Heart left ventricle (tissue), 16 donors: ENCODE measurements at regions of chr11 and their contacts with region 1.

Region 1: DNA sequence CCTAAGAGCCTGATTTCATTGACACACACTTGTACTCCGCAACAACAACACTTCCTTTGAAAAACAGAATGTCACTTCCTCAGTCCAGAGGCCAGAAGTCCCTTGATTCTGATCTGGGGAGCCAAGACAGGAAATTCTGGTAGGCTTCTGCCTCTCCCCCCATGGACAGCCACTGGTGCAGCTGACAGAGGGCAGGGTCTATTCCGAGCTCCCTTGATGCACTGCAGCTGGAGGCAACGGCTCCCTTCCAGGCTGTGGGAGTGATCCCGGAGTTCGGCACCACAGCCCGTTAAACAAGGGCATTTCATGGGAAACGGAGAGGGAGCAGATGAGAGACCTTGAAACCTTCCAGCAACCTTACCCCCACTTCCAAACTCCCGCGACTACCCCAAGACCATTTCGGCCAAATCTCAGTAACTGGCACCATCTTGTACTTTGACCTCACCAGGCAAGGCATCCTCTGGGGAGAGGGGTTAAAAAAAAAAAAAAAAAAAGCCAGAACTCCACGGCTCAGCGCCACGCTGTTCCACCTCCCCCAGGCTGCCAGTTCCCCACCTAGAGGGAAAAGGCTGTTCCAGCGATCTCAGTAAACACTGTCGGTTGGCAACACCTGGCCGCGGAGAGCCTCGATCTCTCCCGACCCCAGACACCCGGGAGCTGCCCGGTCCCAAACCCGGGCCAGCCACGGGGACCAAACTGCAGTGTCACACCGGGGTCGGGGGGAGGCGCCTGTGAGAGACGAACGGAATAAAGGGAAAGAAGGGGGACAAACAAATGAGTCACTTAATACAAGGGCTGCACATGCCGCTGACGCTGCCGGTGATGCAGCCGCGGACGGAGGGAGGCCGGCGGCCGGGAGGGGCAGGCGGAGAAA is 1.1 kb downstream of the GAB2 start:
- DNase-seq: peak; percentile 87 to 93 (median 89)
- ATAC-seq: peak; percentile 67 to 78 (median 74)
- H3K4me3 ChIP-seq: peak overlapping the region; percentile 58 to 100 (median 88)
- H3K27ac ChIP-seq: peak overlapping the region; percentile 93 to 99 (median 97)
- H3K4me1 ChIP-seq: peaks cover 0 to 60% (median 32%) of the 10 kb centered on the region in 12 donors
- H3K27me3 ChIP-seq: no peaks in the 10 kb centered on the region
- CTCF ChIP-seq: peak in 11 of 12 donors; percentile 25 to 67 (median 52)
- POLR2A ChIP-seq: peak in 1 of 2 donors; percentile 87

Region 2: DNA sequence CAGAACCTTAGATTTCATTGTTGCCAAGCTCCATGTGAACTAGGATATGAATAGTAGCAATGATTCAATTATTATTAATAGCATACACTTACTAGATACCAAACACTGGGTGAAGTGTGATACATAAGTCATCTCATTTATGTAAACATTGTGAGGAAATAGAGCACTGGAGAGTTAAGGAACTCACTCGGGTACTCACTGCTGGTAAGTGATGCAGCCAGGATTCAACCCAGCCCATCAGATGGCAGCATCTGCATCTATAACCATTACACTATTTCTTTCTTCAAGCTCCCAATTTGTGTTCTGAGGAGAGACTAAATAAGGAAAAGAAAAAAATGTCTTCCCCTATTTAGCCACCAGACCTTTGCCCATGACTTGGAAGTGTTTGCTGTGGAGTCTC is 266.9 kb before region 1 on chr11:
- intact Hi-C with region 1: loop called in 6 of 10 experiments (anchors 2 to 10 kb)
- DNase-seq: no peak
- ATAC-seq: peak; percentile 56 to 84 (median 78)
- H3K4me3 ChIP-seq: no peak overlapping the region
- H3K27ac ChIP-seq: no peak overlapping the region
- H3K4me1 ChIP-seq: peaks cover 0 to 11% (median 0%) of the 10 kb centered on the region in 12 donors
- H3K27me3 ChIP-seq: no peaks in the 10 kb centered on the region
- CTCF ChIP-seq: peak in 11 of 12 donors; percentile 11 to 66 (median 36)
- POLR2A ChIP-seq: no peak

Region 3: DNA sequence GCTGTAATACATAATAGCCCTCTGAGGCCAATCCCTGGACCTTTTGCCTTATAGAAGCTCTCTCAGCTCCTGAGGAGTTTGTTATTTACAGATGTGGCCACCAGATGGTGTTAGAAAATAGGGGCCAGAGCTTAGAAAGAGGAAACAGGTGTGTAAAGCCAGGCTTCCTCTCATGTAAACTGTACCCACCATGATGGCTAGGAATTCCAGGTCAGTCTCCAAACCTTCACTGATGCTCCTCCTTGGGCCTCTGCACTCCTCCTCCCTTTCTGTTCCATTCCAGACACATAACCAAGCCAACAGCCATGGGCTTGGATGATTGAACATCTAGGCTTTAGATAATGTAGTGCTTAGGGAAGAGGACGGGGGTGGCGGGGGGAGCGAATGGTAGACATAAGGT is 188.1 kb before region 1 on chr11:
- intact Hi-C with region 1: loop called (anchors 1 to 5 kb)
- DNase-seq: peak in 1 of 5 donors; percentile 32
- ATAC-seq: peak in 3 of 4 donors; percentile 53 to 70 (median 55)
- H3K4me3 ChIP-seq: no peak overlapping the region
- H3K27ac ChIP-seq: no peak overlapping the region
- H3K4me1 ChIP-seq: peaks cover 0 to 41% (median 24%) of the 10 kb centered on the region in 12 donors
- H3K27me3 ChIP-seq: no peaks in the 10 kb centered on the region
- CTCF ChIP-seq: peak in 11 of 12 donors; percentile 33 to 73 (median 65)
- POLR2A ChIP-seq: no peak

Region 4: DNA sequence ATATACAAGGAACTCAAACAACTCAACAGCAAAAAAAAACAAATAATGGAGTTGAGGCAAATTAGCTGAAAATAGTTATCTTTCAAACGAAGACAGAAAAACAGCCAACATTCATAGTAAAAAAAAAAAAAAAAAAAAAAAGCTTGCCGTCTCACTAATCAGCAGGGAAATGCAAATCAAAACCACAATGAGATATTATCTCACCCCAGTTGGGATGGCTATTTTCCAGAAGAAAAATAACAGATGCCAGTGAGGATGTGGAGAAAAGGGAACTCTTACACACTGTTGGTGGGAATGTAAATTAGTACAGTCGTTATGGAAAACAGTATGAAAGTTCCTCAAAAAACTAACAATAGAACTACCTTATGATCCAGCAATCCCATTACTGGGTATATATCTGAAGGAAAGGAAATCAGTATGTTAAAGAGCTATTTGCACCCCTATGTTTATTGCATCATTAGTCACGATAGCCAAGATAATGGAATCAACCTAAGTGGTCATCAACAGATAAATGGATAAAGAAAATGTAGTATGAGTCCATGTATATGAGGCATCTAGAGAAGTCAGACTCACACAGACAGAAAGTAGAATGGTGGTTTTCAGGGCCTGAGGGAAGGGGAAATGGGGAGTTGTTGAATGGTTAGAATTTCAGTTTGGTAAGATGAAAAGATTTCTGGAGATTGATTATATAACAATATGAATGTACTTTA is 171.8 kb before region 1 on chr11:
- intact Hi-C with region 1: no loop called
- DNase-seq: no peak
- ATAC-seq: peak in 2 of 4 donors; percentile 22 to 35
- H3K4me3 ChIP-seq: no peak overlapping the region
- H3K27ac ChIP-seq: peak overlapping the region in 8 of 12 donors; percentile 3 to 66 (median 28)
- H3K4me1 ChIP-seq: peaks cover 0 to 19% (median 6%) of the 10 kb centered on the region in 12 donors
- H3K27me3 ChIP-seq: no peaks in the 10 kb centered on the region
- CTCF ChIP-seq: no peak
- POLR2A ChIP-seq: no peak

Region 5: GRCh38 chr11:78310500-78310909 is 106.0 kb before region 1 on chr11:
- intact Hi-C with region 1: loop called in 6 of 10 experiments (anchors 5 to 10 kb)
- DNase-seq: peak; percentile 77 to 86 (median 83)
- ATAC-seq: peak; percentile 83 to 92 (median 89)
- H3K4me3 ChIP-seq: peak overlapping the region in 8 of 12 donors; percentile 0 to 30 (median 20)
- H3K27ac ChIP-seq: peak overlapping the region in 11 of 12 donors; percentile 23 to 81 (median 73)
- H3K4me1 ChIP-seq: peaks cover 0 to 72% (median 52%) of the 10 kb centered on the region in 12 donors
- H3K27me3 ChIP-seq: no peaks in the 10 kb centered on the region
- CTCF ChIP-seq: no peak
- POLR2A ChIP-seq: no peak

Region 6: DNA sequence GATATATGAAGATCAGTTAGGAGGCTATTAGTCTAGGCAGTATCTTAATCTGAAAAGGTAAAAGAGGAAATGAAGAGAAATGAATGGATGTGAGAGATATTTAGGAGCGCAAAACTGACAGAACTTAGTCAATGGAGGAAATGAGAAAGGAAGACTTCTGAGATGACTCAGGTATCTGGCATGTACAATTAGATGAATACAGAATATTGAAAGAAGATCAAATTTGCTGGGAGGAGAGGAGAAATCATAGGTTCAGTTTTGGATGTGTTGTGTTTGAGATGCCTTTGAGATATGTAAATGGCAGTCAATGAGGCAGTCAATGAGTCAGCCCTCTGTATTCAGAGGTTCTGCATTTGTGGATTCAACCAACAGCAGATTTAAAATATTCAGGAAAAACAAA is 43.9 kb after region 1 on chr11:
- intact Hi-C with region 1: no loop called
- DNase-seq: no peak
- ATAC-seq: no peak
- H3K4me3 ChIP-seq: no peak overlapping the region
- H3K27ac ChIP-seq: no peak overlapping the region
- H3K4me1 ChIP-seq: peaks cover 0 to 5% (median 0%) of the 10 kb centered on the region in 12 donors
- H3K27me3 ChIP-seq: no peaks in the 10 kb centered on the region
- CTCF ChIP-seq: no peak
- POLR2A ChIP-seq: no peak

Region 7: GRCh38 chr11:78525709-78526108 is 109.2 kb after region 1 on chr11:
- intact Hi-C with region 1: no loop called
- DNase-seq: no peak
- ATAC-seq: no peak
- H3K4me3 ChIP-seq: no peak overlapping the region
- H3K27ac ChIP-seq: no peak overlapping the region
- H3K4me1 ChIP-seq: no peaks in the 10 kb centered on the region
- H3K27me3 ChIP-seq: no peaks in the 10 kb centered on the region
- CTCF ChIP-seq: no peak
- POLR2A ChIP-seq: no peak

Region 8: DNA sequence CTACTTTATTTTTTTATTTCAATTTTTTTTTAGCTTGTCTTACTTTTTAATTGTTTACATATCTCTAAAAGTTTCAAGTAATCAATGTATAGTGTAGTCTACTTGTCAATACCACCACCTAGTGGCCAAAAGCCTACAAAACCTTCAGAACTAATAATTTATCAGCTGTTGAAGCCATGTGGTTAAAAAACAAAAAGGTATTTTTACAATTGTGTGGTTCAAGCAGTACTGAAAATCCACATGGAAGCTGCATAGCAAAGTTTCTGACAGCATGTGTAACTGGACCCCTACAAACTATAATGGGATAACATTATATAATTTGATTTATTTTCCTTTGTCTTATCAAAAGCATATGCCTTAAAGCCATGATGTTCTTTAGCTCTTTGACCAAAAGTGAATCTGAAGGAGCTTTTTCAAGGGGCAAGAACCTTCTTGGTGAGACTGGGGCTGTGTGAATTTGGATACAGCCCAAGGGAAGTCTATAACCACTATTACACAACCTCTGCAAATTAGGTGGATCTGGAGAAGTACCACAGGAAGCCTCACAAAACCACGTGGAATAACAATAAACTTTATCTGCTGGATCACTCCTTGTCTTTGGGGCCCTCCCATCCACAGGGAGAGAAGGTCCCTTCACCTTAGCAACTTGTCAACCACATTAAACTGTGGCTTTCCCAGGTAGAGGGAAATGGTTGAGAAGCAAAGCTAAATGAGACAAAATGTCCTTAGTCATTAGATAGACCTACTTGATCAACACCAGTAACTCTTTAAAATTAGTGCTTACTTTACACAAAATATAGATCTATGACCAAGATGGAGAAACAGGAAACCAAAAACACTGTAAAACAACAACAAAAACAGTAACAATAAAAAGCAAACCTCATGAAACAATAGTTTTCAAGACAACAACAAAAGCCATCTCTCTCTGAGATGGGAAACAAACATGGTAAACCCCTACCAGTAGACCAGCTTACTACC is 148.2 kb after region 1 on chr11:
- intact Hi-C with region 1: loop called (anchors 2 to 10 kb)
- DNase-seq: peak in 1 of 5 donors; percentile 35
- ATAC-seq: peak in 3 of 4 donors; percentile 48 to 53 (median 50)
- H3K4me3 ChIP-seq: no peak overlapping the region
- H3K27ac ChIP-seq: no peak overlapping the region
- H3K4me1 ChIP-seq: peaks cover 0 to 41% (median 24%) of the 10 kb centered on the region in 12 donors
- H3K27me3 ChIP-seq: no peaks in the 10 kb centered on the region
- CTCF ChIP-seq: peak; percentile 70 to 86 (median 78)
- POLR2A ChIP-seq: no peak